HEK293 (cell line): ENCODE measurements at regions of chr2 and their contacts with region 1.

Region 1: DNA sequence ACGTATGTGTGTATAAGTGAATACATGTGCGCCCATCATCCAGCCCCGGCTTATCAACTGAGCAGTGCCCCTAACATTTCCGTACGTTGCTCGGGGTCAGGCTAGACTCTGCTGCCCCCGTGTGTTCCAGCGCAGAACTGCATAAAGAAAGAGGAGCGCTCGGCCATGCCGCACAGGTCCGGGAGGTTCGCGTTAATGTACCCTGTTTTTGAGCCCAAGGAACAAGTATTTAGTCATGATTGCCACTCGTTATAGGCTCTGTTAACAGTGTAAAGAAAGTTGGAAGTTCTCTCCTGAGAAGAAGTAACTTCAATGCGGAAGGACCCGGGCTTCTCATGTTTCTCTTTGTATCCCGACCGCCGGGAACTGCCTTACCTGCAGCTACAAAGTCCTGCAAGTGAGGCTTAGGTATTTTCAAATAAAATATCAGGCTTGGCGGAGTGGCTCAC is 55.7 kb downstream of the CD8B2 start:
- H3K4me3 ChIP-seq: no peak overlapping the region
- H3K27ac ChIP-seq: no peak overlapping the region
- H3K4me1 ChIP-seq: no peaks in the 10 kb centered on the region
- CTCF ChIP-seq: peak; percentile 44

Region 2: DNA sequence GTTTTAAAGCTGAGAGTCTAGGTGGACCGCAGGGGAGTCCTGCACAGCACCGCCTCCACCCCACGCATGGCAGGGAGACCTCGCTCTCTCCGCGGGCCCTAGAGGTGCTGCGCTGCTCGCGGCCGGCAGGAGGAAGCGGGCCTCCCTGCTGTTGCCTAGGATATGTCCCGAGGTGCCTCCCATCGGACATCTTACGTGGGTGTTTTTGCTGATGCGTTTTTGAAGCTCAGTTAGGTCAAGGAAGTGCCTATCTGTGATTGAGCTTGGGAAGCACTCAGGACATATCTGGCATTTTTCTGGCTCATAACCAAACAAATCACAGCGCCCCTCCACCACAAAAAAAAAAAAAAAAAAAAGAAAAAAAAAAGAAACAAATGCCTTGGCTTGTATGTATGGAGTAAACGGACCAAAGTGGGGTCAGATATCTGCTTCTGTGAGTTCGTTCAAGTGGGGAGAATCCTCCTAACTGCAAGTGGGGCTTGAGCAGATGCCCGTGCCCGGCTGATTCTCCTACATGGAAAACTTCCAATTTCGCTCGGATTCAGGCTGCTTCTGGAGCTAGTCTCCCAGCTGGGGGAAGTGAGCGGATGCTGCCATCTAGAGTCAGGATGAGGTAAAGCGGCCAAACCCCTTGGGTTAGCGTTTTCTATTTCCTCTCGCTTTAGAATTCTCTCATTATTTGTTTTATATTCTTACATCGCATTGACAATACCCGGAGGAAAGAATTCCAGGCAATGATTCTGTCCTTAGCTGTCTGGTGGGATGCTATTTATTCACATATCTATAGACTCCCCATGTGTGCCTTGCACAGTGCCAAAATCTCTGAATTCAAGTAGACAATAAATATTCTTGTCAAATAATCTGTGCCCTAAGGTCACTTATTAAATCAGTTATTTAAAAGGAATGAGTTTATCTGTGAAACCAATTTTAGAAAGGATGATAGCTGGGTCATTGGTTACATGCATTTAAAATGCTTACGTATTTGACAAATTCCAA is 39.6 kb after region 1 on chr2:
- CTCF ChIA-PET with region 1: interaction called, 10 read pairs
- POLR2A ChIA-PET with region 1: no interaction called
- H3K4me3 ChIP-seq: peak overlapping the region; percentile 30
- H3K27ac ChIP-seq: no peak overlapping the region
- H3K4me1 ChIP-seq: no peaks in the 10 kb centered on the region
- CTCF ChIP-seq: peak; percentile 65

Region 3: GRCh38 chr2:106734165-106734564 is 191.3 kb after region 1 on chr2:
- CTCF ChIA-PET with region 1: no interaction called
- POLR2A ChIA-PET with region 1: no interaction called
- H3K4me3 ChIP-seq: no peak overlapping the region
- H3K27ac ChIP-seq: no peak overlapping the region
- H3K4me1 ChIP-seq: no peaks in the 10 kb centered on the region
- CTCF ChIP-seq: no peak